ENCODE measurements at regions of chr12 and their contacts with region 1.

Region 1: DNA sequence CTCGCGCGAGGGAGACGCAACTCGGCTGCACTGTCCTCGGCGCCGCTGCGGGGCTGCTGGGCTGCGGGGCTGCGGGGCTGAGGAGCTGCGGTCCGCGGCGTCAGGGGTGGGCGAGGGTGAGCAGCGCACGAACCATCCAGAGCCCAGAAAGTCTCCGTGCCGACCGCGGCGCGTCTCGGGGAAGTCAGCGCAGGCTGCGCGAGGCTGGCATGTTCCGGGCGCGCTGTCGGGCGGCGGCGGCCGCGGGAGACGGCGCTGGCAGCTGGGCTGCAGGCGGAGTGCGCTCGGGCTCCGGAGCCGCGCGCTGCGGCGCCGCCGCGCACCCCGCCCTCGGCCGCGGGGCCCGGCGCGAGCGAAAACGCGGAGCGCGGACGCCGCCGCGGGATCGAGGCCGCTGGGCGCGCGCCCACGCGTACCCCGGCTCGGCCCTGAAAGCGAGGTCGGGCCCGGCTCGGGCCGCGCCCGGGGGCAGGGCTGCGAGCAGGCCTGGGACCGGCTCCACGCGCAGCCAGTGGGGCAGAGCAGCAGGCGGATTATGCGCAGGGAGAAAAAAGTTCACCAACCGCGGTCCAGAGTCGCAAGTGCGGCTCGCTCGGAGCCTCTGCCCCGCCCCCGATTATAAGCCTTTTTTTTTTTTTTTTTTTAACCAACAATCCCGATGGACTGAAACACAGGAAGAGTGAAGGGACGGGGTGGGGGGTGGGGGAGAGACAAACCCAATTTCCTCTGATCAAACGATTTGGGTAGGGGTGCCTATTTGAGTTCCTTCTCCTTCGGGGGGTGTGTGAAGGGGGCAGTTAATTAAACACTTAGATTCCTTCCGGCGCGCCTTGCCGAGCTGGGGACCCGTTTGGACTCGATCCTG is at the start of gene PRICKLE1:
- DNase-seq: peak in 1 of 2 donors; percentile 17
- ATAC-seq: peak; percentile 73 to 82
- H3K4me3 ChIP-seq: peak within 1 kb of the TSS; percentile 66 to 93 (median 70)
- H3K27ac ChIP-seq: peak within 1 kb of the TSS; percentile 37 to 68 (median 62)
- H3K4me1 ChIP-seq: peaks cover 26 to 30% of the 10 kb centered on the region in 2 donors
- H3K27me3 ChIP-seq: no peaks in the 10 kb centered on the region
- CTCF ChIP-seq: peak in 1 of 5 experiments; percentile 15
- POLR2A ChIP-seq: peak in 1 of 2 donors; percentile 7
- total RNA-seq, gene PRICKLE1: 0.87 to 9.2 (median 3.6) TPM

Region 2: DNA sequence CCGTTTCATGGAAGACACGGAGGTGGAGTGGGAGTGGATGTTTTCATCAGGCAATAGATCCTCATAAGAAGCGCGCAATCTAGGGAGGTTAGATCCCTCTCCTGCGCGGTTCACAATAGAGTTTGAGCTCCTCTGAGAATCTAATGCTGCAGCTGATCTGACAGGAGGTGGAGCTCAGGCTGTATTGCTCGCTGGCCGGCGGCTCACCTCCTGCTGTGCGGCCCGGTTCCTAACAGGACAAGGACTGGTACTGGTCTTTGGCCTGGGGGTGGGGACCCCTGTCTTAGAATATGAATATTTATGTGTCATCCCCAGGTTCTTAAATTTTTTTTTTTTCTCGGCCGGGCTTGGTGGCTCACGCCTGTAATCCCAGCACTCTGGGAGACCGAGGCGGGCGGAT is 36.9 kb before region 1 on chr12:
- in situ Hi-C with region 1: no loop called
- intact Hi-C with region 1: no loop called
- DNase-seq: no peak
- ATAC-seq: no peak
- H3K4me3 ChIP-seq: no peak overlapping the region
- H3K27ac ChIP-seq: no peak overlapping the region
- H3K4me1 ChIP-seq: peaks cover 3 to 12% of the 10 kb centered on the region in 2 donors
- H3K27me3 ChIP-seq: no peaks in the 10 kb centered on the region
- CTCF ChIP-seq: no peak
- POLR2A ChIP-seq: no peak

Region 3: DNA sequence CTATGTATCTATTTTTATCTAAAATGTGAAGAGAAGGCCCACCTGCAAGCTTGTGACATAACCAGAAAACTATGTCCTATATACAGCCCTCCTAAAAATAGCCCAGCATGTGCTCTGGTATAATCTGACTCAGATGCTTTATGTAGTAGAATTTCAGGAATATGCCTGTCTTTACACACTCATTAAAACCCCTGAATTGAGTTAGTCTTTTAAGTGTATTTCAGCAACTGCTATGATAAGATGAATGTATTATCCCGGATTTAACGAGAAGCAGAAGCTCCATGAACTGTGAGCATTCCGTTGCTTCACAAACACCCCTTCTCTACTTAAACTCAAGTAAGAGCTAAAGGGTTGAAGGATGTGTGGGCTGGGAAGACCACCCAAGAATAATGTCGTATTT is 89.8 kb after region 1 on chr12:
- in situ Hi-C with region 1: no loop called
- intact Hi-C with region 1: no loop called
- DNase-seq: no peak
- ATAC-seq: peak; percentile 87 to 96
- H3K4me3 ChIP-seq: no peak overlapping the region
- H3K27ac ChIP-seq: peak overlapping the region in 3 of 4 donors; percentile 8 to 57 (median 50)
- H3K4me1 ChIP-seq: peaks cover 13 to 16% of the 10 kb centered on the region in 2 donors
- H3K27me3 ChIP-seq: no peaks in the 10 kb centered on the region
- CTCF ChIP-seq: no peak
- POLR2A ChIP-seq: no peak

Region 4: GRCh38 chr12:43282106-43282505 is 692.4 kb after region 1 on chr12:
- in situ Hi-C with region 1: no loop called
- intact Hi-C with region 1: loop called (anchors 5 kb)
- DNase-seq: no peak
- ATAC-seq: no peak
- H3K4me3 ChIP-seq: no peak overlapping the region
- H3K27ac ChIP-seq: no peak overlapping the region
- H3K4me1 ChIP-seq: no peaks in the 10 kb centered on the region
- H3K27me3 ChIP-seq: no peaks in the 10 kb centered on the region
- CTCF ChIP-seq: no peak
- POLR2A ChIP-seq: no peak

Region 5: GRCh38 chr12:43338848-43339526 is 749.3 kb after region 1 on chr12:
- in situ Hi-C with region 1: no loop called
- intact Hi-C with region 1: loop called (anchors 5 kb)
- DNase-seq: no peak
- ATAC-seq: peak; percentile 69 to 78
- H3K4me3 ChIP-seq: no peak overlapping the region
- H3K27ac ChIP-seq: no peak overlapping the region
- H3K4me1 ChIP-seq: peaks cover 5 to 12% of the 10 kb centered on the region in 2 donors
- H3K27me3 ChIP-seq: no peaks in the 10 kb centered on the region
- CTCF ChIP-seq: peak in 1 of 5 experiments; percentile 29
- POLR2A ChIP-seq: no peak